ENCODE measurements at regions of chr1 and their contacts with region 1.

Region 1: GRCh38 chr1:184545595-184545994 is 158.8 kb downstream of the C1orf21 start:
- DNase-seq: no peak
- H3K4me3 ChIP-seq: no peak overlapping the region
- H3K27ac ChIP-seq: no peak overlapping the region
- H3K27me3 ChIP-seq: no peaks in the 10 kb centered on the region
- CTCF ChIP-seq: no peak

Region 2: GRCh38 chr1:184597659-184598357 is 52.2 kb after region 1 on chr1:
- CTCF ChIA-PET with region 1: interaction called, 10 read pairs
- POLR2A ChIA-PET with region 1: no interaction called
- DNase-seq: no peak
- H3K4me3 ChIP-seq: no peak overlapping the region
- H3K27ac ChIP-seq: no peak overlapping the region
- H3K27me3 ChIP-seq: no peaks in the 10 kb centered on the region
- CTCF ChIP-seq: no peak

Region 3: GRCh38 chr1:185213091-185213490 is 667.5 kb after region 1 on chr1:
- CTCF ChIA-PET with region 1: interaction called, 12 read pairs
- POLR2A ChIA-PET with region 1: no interaction called
- DNase-seq: peak; percentile 2
- H3K4me3 ChIP-seq: no peak overlapping the region
- H3K27ac ChIP-seq: no peak overlapping the region
- H3K27me3 ChIP-seq: no peaks in the 10 kb centered on the region
- CTCF ChIP-seq: no peak

Measured in AG04450 (cell line).